ENCODE measurements at regions of chr12 and their contacts with region 1.

Region 1: DNA sequence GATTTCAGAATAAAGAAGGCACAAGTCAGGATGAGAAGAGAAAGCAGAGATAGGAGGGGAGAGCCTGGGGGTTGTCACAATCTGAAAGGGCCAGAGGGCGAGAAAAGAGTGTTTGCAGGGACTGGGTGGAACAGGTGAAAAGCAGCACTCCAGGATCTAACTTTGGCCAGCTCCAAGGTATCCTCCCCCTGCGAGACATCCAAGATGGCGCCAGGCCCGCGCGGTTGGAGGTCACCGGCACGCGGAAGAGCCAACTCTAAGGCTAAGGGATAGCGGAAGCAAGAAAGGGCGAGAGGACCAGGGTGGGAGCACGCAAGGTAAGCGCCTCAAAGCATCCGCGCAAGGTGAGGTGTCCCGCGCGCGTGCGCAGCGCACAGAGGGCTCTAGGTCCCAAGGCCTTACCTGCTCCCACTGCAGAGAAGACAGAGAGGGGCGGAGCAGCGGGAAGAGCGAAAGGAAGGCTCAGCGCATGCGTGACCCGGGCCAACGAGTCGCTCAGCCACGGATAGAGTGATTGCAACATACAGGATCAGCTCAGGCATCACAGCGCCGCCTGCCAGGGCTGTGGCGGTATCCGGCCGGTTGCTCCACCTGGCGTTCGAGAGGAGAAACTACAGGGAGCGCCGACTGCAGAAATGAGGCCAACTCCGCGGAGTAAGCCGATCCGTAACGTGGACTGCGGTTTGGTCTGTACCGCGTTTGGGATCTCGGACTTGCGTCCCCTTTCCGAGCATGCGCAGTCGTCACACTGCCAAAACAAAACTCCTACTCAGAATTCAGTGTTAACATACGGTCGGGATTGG is at the start of gene ATP5MC2:
- DNase-seq: peak; percentile 96 to 99
- H3K4me3 ChIP-seq: peak within 1 kb of the TSS; percentile 36
- CTCF ChIP-seq: peak in 2 of 3 donors; percentile 53 to 99
- POLR2A ChIP-seq: peak in 1 of 2 donors; percentile 34
- total RNA-seq, gene ATP5MC2: 214 to 533 (median 318) TPM

Region 2: GRCh38 chr12:53543539-53543938 is 132.3 kb before region 1 on chr12:
- intact Hi-C with region 1: loop called (anchors 5 kb)
- DNase-seq: peak in 1 of 2 donors; percentile 39
- H3K4me3 ChIP-seq: no peak overlapping the region
- CTCF ChIP-seq: peak in 1 of 3 donors; percentile 66
- POLR2A ChIP-seq: no peak

Region 3: DNA sequence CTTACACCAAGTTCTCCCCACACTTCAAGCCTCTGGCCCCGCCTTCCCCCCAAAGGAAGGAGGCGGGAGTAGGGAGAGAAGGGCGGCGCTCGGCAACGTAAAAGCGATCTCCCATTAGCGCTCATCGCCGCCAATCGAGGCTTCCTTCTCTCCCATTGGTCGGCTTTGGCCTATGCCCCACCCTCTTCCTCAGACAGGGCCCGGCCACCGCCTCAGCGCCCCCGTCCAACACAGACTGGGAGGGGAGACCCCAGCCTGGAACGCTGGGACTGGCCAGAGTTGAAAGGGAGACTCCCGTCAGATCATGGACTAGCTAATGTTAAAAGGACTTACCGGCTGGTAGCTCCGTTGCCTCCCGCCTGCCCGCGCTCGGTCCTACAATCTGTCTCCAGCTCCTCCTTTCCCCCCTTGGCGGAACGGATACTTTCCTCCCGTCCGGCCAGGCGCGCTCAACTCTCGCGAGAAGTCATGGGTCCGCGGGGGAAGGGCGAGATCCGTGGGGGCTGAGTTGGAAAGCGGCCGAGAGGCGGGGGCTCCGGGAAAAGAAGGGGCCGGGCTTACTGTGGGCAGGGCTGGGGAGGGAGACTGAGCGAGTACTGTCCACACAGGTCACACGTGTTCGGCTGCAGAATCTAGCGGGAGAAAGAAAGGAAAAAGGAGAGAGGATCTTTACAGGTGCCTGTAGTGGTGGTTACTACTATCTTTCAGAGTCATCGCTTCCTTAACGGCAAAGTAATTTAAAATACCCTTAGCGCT is 49.7 kb before region 1 on chr12 and contains the start of gene ATF7:
- intact Hi-C with region 1: loop called (anchors 10 kb)
- DNase-seq: peak; percentile 97 to 100
- H3K4me3 ChIP-seq: peak within 1 kb of the TSS; percentile 56
- CTCF ChIP-seq: peak in 1 of 3 donors; percentile 57
- POLR2A ChIP-seq: no peak
- total RNA-seq, gene ATF7: 25.1 to 34.4 (median 29.0) TPM

Measured in lower leg skin (tissue), 4 donors.